Panc1 (cell line): ENCODE measurements at regions of chr17 and their contacts with region 1.

Region 1: DNA sequence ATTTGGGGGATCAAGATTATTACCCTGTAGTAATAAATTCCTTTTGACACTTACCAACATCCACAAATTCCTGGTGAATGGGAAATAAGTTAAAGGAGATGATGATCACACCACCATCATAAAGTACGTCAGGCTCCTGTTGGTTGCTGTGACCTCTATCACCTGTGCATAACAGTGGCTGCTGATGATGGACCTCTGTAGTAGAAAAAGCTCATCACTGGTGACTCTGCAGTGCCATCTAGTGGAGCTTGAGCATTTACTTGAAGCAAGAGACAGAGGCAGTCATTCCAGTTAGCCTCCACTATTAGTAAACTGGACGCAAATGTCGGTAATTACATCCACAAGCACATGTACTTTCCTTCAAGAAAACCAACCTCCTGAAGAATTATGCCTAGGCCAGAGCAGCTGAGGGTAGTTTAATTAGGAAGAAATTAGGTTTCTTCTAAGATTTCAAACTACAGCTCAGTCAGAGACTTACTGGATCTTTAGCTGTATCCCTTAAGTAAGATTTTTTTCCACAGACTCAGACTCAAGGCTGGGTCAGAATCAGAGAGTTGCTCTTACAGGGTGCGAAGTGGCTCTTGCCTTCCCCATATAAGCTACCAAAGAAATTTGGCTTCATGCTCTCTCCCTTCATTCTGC is 39.3 kb downstream of the CYB561 start:
- DNase-seq: peak; percentile 64
- ATAC-seq: peak; percentile 98
- H3K4me3 ChIP-seq: no peak overlapping the region
- H3K27ac ChIP-seq: peak overlapping the region; percentile 25; the same call in 1 of the 2 replicates
- H3K4me1 ChIP-seq: no peaks in the 10 kb centered on the region
- H3K27me3 ChIP-seq: no peaks in the 10 kb centered on the region
- CTCF ChIP-seq: peak; percentile 91

Region 2: GRCh38 chr17:62671583-62672312 is 735.1 kb before region 1 on chr17:
- CTCF ChIA-PET with region 1: no interaction called
- POLR2A ChIA-PET with region 1: interaction called, 3 read pairs
- in situ Hi-C with region 1: no loop called
- intact Hi-C with region 1: loop called (anchors 10 kb)
- DNase-seq: no peak
- ATAC-seq: peak; percentile 30
- H3K4me3 ChIP-seq: no peak overlapping the region
- H3K27ac ChIP-seq: no peak overlapping the region
- H3K4me1 ChIP-seq: no peaks in the 10 kb centered on the region; the same call in 1 of the 2 replicates
- H3K27me3 ChIP-seq: no peaks in the 10 kb centered on the region
- CTCF ChIP-seq: no peak

Region 3: GRCh38 chr17:62703775-62704378 is 702.9 kb before region 1 on chr17:
- CTCF ChIA-PET with region 1: interaction called, 3 read pairs
- POLR2A ChIA-PET with region 1: no interaction called
- in situ Hi-C with region 1: no loop called
- intact Hi-C with region 1: loop called (anchors 10 kb)
- DNase-seq: no peak
- ATAC-seq: peak; percentile 95
- H3K4me3 ChIP-seq: peak overlapping the region; percentile 55 to 68
- H3K27ac ChIP-seq: peak overlapping the region; percentile 79
- H3K4me1 ChIP-seq: peaks cover 29% of the 10 kb centered on the region
- H3K27me3 ChIP-seq: no peaks in the 10 kb centered on the region
- CTCF ChIP-seq: peak; percentile 97

Region 4: DNA sequence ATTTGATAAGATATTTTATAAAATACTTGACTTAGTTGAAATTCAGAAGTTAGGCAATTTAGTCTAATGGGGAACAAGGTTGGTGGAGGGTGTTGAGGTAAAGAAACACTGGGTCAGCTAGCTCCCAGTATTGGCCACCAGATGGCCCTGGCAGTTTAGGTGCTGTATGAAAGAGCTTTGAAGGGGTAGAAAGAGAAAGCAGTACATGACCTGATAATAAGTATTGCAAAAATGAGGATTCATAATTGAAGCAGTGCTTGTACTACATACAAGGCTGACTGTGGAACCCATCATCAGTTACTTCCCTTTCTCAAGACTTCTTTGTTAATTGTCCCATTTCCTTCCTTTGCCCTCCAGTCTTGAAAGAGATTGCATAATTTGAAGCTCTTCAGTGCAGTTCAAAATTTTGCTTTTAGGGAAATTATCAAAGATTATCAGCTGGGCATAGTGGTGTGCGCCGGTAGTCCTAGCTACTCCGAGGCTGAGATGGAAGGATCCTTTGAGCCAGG is 411.4 kb before region 1 on chr17:
- CTCF ChIA-PET with region 1: interaction called, 22 read pairs
- POLR2A ChIA-PET with region 1: no interaction called
- in situ Hi-C with region 1: no loop called
- intact Hi-C with region 1: loop called (anchors 10 kb)
- DNase-seq: no peak
- ATAC-seq: peak; percentile 90
- H3K4me3 ChIP-seq: no peak overlapping the region
- H3K27ac ChIP-seq: no peak overlapping the region
- H3K4me1 ChIP-seq: peaks cover 3% of the 10 kb centered on the region; the same call in 1 of the 2 replicates
- H3K27me3 ChIP-seq: no peaks in the 10 kb centered on the region
- CTCF ChIP-seq: peak; percentile 82

Region 5: DNA sequence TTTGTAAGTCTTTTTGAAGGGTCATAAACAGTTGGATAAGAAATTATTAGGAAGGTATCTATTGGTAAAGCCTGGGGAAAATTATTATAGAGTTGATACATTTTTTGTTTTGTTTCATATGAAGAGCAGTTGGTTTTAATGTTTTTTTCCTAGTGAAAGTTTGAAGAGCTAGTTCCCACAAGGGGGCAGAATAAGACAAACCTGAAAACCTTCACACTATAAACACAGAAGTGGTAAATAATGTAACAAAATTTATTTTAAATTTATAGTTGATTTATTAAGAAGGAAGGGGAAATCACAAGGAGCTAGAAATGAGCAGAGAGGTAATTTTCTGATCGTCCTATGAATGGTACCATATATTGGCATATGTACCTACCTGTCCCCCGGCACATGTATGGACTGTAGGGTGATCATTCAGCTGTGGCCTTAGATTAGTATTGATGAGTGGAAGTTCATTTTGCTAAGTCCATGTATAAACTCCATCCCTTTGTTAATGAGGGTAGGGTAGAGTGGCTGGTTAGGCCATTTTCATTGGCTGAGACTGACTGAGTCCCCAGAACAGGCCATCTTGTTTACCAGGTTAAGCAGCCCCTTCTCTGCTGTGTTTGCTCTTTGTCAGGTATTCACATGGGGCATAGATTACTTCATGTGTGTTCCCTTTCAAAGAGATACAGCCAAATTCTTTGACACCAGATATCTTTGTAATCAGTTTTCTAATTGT is 324.4 kb before region 1 on chr17:
- CTCF ChIA-PET with region 1: interaction called, 17 read pairs
- POLR2A ChIA-PET with region 1: no interaction called
- in situ Hi-C with region 1: no loop called
- intact Hi-C with region 1: loop called (anchors 2 kb)
- DNase-seq: no peak
- ATAC-seq: peak; percentile 62; the same call in 1 of the 2 replicates
- H3K4me3 ChIP-seq: no peak overlapping the region
- H3K27ac ChIP-seq: peak overlapping the region; percentile 44; the same call in 1 of the 2 replicates
- H3K4me1 ChIP-seq: peaks cover 5% of the 10 kb centered on the region; the same call in 1 of the 2 replicates
- H3K27me3 ChIP-seq: no peaks in the 10 kb centered on the region
- CTCF ChIP-seq: peak; percentile 53

Region 6: DNA sequence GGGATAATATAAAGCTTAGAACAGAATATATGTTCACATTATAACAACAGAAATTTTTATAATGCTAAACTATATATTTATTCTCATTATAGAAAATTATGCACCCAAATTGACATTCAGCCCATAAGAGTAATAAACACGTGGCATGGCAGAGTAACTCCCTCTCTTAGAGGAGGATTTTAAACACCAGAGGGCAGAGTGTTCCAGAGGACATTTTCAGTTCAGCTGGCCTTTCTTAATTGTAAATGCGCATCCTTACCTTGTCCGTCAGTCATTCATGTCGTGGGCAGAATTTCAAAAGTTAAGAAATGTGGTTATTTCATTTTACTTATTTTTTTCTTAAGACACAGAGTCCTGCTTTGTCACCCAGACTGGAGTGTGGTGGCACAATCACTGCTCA is 293.6 kb before region 1 on chr17:
- CTCF ChIA-PET with region 1: interaction called, 3 read pairs
- POLR2A ChIA-PET with region 1: no interaction called
- in situ Hi-C with region 1: no loop called
- intact Hi-C with region 1: loop called (anchors 10 kb)
- DNase-seq: no peak
- ATAC-seq: no peak
- H3K4me3 ChIP-seq: no peak overlapping the region
- H3K27ac ChIP-seq: no peak overlapping the region
- H3K4me1 ChIP-seq: no peaks in the 10 kb centered on the region; the same call in 1 of the 2 replicates
- H3K27me3 ChIP-seq: no peaks in the 10 kb centered on the region
- CTCF ChIP-seq: peak; percentile 46; the same call in 1 of the 2 replicates